CD14-positive monocyte (primary cell): ENCODE measurements at regions of chr6 and their contacts with region 1.

Region 1: GRCh38 chr6:161273752-161274487 is at the start of gene AGPAT4:
- DNase-seq: peak; percentile 95 to 98 (median 97)
- H3K4me3 ChIP-seq: peak within 1 kb of the TSS; percentile 49 to 94 (median 70)
- H3K4me3 Mint-ChIP-seq: peak within 1 kb of the TSS; percentile 85 to 95
- H3K27ac ChIP-seq: peak within 1 kb of the TSS; percentile 80 to 96
- H3K27ac Mint-ChIP-seq: peak within 1 kb of the TSS; percentile 96 to 99 (median 98)
- H3K4me1 ChIP-seq: peaks cover 12 to 15% of the 10 kb centered on the region in 2 donors
- H3K4me1 Mint-ChIP-seq: peaks cover 27% of the 10 kb centered on the region
- H3K27me3 ChIP-seq: peaks cover 5% of the 10 kb centered on the region in 2 donors
- H3K27me3 Mint-ChIP-seq: peaks cover 0 to 13% (median 0%) of the 10 kb centered on the region in 3 donors
- CTCF ChIP-seq: no peak
- polyA plus RNA-seq, gene AGPAT4: 6.4 to 15.8 (median 6.9) TPM

Region 2: DNA sequence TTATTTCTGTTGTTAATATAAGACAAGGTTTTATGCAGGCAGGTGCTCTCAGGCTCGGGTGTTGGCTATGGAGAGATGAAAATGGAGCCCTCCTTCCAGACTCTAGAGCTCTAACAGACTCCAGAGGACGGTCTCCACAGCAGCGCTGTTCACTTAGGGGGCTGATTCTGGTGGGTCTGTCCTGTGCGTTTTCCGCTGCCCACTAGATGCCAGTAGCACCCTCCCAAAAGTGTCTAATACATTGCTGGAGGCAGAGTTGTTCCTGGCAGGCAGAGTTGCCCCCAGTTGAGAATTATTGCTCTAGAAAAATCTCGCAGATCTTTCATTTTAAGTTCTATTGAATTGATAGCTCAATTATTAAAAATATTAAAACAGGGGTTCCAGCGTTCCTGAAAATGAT is 172.4 kb before region 1 on chr6:
- intact Hi-C with region 1: loop called in 1 of 2 experiments (anchors 5 kb)
- DNase-seq: peak in 1 of 3 donors; percentile 12
- H3K4me3 ChIP-seq: no peak overlapping the region
- H3K4me3 Mint-ChIP-seq: no peak overlapping the region
- H3K27ac ChIP-seq: no peak overlapping the region
- H3K27ac Mint-ChIP-seq: peak overlapping the region in 3 of 7 donors; percentile 6 to 67 (median 16)
- H3K4me1 ChIP-seq: no peaks in the 10 kb centered on the region
- H3K4me1 Mint-ChIP-seq: no peaks in the 10 kb centered on the region
- H3K27me3 ChIP-seq: no peaks in the 10 kb centered on the region
- H3K27me3 Mint-ChIP-seq: peaks cover 0 to 1% (median 0%) of the 10 kb centered on the region in 3 donors
- CTCF ChIP-seq: peak; percentile 47

Region 3: GRCh38 chr6:161111261-161111660 is 162.7 kb before region 1 on chr6:
- intact Hi-C with region 1: loop called in 1 of 2 experiments (anchors 10 kb)
- DNase-seq: peak; percentile 27 to 74 (median 33)
- H3K4me3 ChIP-seq: no peak overlapping the region
- H3K4me3 Mint-ChIP-seq: no peak overlapping the region
- H3K27ac ChIP-seq: peak overlapping the region in 1 of 2 donors; percentile 78
- H3K27ac Mint-ChIP-seq: peak overlapping the region in 6 of 7 donors; percentile 6 to 87 (median 57)
- H3K4me1 ChIP-seq: peaks cover 34 to 41% of the 10 kb centered on the region in 2 donors
- H3K4me1 Mint-ChIP-seq: peaks cover 38% of the 10 kb centered on the region
- H3K27me3 ChIP-seq: no peaks in the 10 kb centered on the region
- H3K27me3 Mint-ChIP-seq: peaks cover 0 to 1% (median 0%) of the 10 kb centered on the region in 3 donors
- CTCF ChIP-seq: no peak

Region 4: GRCh38 chr6:161215193-161215592 is 58.7 kb before region 1 on chr6:
- intact Hi-C with region 1: no loop called
- DNase-seq: no peak
- H3K4me3 ChIP-seq: no peak overlapping the region
- H3K4me3 Mint-ChIP-seq: no peak overlapping the region
- H3K27ac ChIP-seq: no peak overlapping the region
- H3K27ac Mint-ChIP-seq: no peak overlapping the region
- H3K4me1 ChIP-seq: no peaks in the 10 kb centered on the region
- H3K4me1 Mint-ChIP-seq: no peaks in the 10 kb centered on the region
- H3K27me3 ChIP-seq: no peaks in the 10 kb centered on the region
- H3K27me3 Mint-ChIP-seq: peaks cover 0 to 2% (median 0%) of the 10 kb centered on the region in 3 donors
- CTCF ChIP-seq: no peak

Region 5: GRCh38 chr6:161327360-161327953 is 53.5 kb after region 1 on chr6:
- intact Hi-C with region 1: no loop called
- DNase-seq: no peak
- H3K4me3 ChIP-seq: no peak overlapping the region
- H3K4me3 Mint-ChIP-seq: no peak overlapping the region
- H3K27ac ChIP-seq: no peak overlapping the region
- H3K27ac Mint-ChIP-seq: no peak overlapping the region
- H3K4me1 ChIP-seq: no peaks in the 10 kb centered on the region
- H3K4me1 Mint-ChIP-seq: no peaks in the 10 kb centered on the region
- H3K27me3 ChIP-seq: no peaks in the 10 kb centered on the region
- H3K27me3 Mint-ChIP-seq: peaks cover 0 to 4% (median 0%) of the 10 kb centered on the region in 3 donors
- CTCF ChIP-seq: no peak

Region 6: GRCh38 chr6:161393839-161394364 is 120.0 kb after region 1 on chr6:
- intact Hi-C with region 1: no loop called
- DNase-seq: peak; percentile 74 to 89 (median 85)
- H3K4me3 ChIP-seq: peak overlapping the region in 1 of 3 experiments; percentile 16
- H3K4me3 Mint-ChIP-seq: no peak overlapping the region
- H3K27ac ChIP-seq: no peak overlapping the region
- H3K27ac Mint-ChIP-seq: no peak overlapping the region
- H3K4me1 ChIP-seq: peaks cover 4 to 6% of the 10 kb centered on the region in 2 donors
- H3K4me1 Mint-ChIP-seq: no peaks in the 10 kb centered on the region
- H3K27me3 ChIP-seq: no peaks in the 10 kb centered on the region
- H3K27me3 Mint-ChIP-seq: peaks cover 2 to 3% (median 3%) of the 10 kb centered on the region in 3 donors
- CTCF ChIP-seq: peak; percentile 81

Region 7: DNA sequence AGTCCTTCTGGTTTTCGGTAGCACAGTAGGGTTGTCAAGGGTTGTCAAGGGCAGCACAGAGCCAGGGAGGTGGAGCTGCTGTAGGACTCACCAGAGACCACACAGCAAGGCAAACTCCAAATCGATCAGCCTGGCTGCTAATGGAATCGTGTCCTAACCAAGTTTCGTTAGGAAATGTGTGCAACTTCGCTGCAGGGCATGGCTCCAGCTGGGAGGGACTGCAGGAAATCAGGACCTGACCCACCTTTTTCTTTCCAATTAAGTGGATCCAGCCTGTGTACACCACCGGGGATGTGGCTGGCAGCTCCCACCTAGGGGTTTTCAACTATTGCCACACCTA is 1888.9 kb after region 1 on chr6:
- intact Hi-C with region 1: no loop called
- DNase-seq: no peak
- H3K4me3 ChIP-seq: no peak overlapping the region
- H3K4me3 Mint-ChIP-seq: no peak overlapping the region
- H3K27ac ChIP-seq: no peak overlapping the region
- H3K27ac Mint-ChIP-seq: no peak overlapping the region
- H3K4me1 ChIP-seq: no peaks in the 10 kb centered on the region
- H3K4me1 Mint-ChIP-seq: no peaks in the 10 kb centered on the region
- H3K27me3 ChIP-seq: no peaks in the 10 kb centered on the region
- H3K27me3 Mint-ChIP-seq: peaks cover 0 to 5% (median 2%) of the 10 kb centered on the region in 3 donors
- CTCF ChIP-seq: no peak